CD8-positive, alpha-beta T cell (primary cell): ENCODE measurements at regions of chr12 and their contacts with region 1.

Region 1: GRCh38 chr12:59834659-59835474 is 239.0 kb downstream of the SLC16A7 start:
- DNase-seq: peak in 2 of 9 experiments; percentile 26 to 43
- ATAC-seq: no peak
- H3K4me3 ChIP-seq: no peak overlapping the region
- H3K4me3 Mint-ChIP-seq: no peak overlapping the region
- H3K27ac ChIP-seq: no peak overlapping the region
- H3K27ac Mint-ChIP-seq: no peak overlapping the region
- H3K4me1 ChIP-seq: no peaks in the 10 kb centered on the region
- H3K4me1 Mint-ChIP-seq: no peaks in the 10 kb centered on the region
- H3K27me3 ChIP-seq: no peaks in the 10 kb centered on the region
- H3K27me3 Mint-ChIP-seq: peaks cover 5% of the 10 kb centered on the region
- CTCF ChIP-seq: peak; percentile 53

Region 2: GRCh38 chr12:58346032-58346632 is 1488.7 kb before region 1 on chr12:
- CTCF ChIA-PET with region 1: no interaction called
- POLR2A ChIA-PET with region 1: no interaction called
- intact Hi-C with region 1: loop called (anchors 10 kb)
- DNase-seq: peak in 2 of 9 experiments; percentile 9 to 22
- ATAC-seq: no peak
- H3K4me3 ChIP-seq: no peak overlapping the region
- H3K4me3 Mint-ChIP-seq: no peak overlapping the region
- H3K27ac ChIP-seq: no peak overlapping the region
- H3K27ac Mint-ChIP-seq: no peak overlapping the region
- H3K4me1 ChIP-seq: no peaks in the 10 kb centered on the region
- H3K4me1 Mint-ChIP-seq: no peaks in the 10 kb centered on the region
- H3K27me3 ChIP-seq: peaks cover 0 to 2% of the 10 kb centered on the region in 2 experiments
- H3K27me3 Mint-ChIP-seq: peaks cover 14% of the 10 kb centered on the region
- CTCF ChIP-seq: peak; percentile 91

Region 3: GRCh38 chr12:59164991-59165718 is 669.7 kb before region 1 on chr12:
- CTCF ChIA-PET with region 1: no interaction called
- POLR2A ChIA-PET with region 1: no interaction called
- intact Hi-C with region 1: no loop called
- DNase-seq: no peak
- ATAC-seq: no peak
- H3K4me3 ChIP-seq: no peak overlapping the region
- H3K4me3 Mint-ChIP-seq: no peak overlapping the region
- H3K27ac ChIP-seq: no peak overlapping the region
- H3K27ac Mint-ChIP-seq: no peak overlapping the region
- H3K4me1 ChIP-seq: no peaks in the 10 kb centered on the region
- H3K4me1 Mint-ChIP-seq: no peaks in the 10 kb centered on the region
- H3K27me3 ChIP-seq: no peaks in the 10 kb centered on the region
- H3K27me3 Mint-ChIP-seq: no peaks in the 10 kb centered on the region
- CTCF ChIP-seq: no peak

Region 4: GRCh38 chr12:59403259-59403932 is 431.5 kb before region 1 on chr12:
- CTCF ChIA-PET with region 1: interaction called, 11 read pairs
- POLR2A ChIA-PET with region 1: no interaction called
- intact Hi-C with region 1: loop called (anchors 1 to 2 kb)
- DNase-seq: peak in 7 of 9 experiments; percentile 1 to 65 (median 27)
- ATAC-seq: no peak
- H3K4me3 ChIP-seq: no peak overlapping the region
- H3K4me3 Mint-ChIP-seq: no peak overlapping the region
- H3K27ac ChIP-seq: no peak overlapping the region
- H3K27ac Mint-ChIP-seq: no peak overlapping the region
- H3K4me1 ChIP-seq: no peaks in the 10 kb centered on the region
- H3K4me1 Mint-ChIP-seq: peaks cover 2% of the 10 kb centered on the region
- H3K27me3 ChIP-seq: no peaks in the 10 kb centered on the region
- H3K27me3 Mint-ChIP-seq: peaks cover 2% of the 10 kb centered on the region
- CTCF ChIP-seq: peak; percentile 78

Region 5: DNA sequence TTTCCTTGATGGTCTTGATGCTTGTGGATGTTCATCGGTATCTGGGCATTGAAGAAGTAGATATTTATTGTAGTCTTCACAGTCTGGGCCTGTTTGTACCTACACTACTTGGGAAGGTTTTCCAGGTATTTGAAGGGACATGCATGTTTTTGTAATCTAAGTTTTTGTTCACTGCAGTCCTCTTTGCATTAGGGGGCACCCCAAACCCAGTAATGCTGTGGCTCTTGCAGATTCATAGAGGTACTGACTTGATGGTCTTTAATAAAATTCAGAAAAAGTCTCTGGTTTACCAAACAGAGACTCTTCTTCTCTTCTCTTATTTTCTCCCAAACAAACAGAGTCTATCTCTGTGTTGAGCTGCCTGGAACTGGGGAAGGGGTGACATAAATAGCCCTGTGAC is 389.9 kb before region 1 on chr12:
- CTCF ChIA-PET with region 1: interaction called, 11 read pairs
- POLR2A ChIA-PET with region 1: no interaction called
- intact Hi-C with region 1: loop called (anchors 1 to 5 kb)
- DNase-seq: peak in 4 of 9 experiments; percentile 11 to 44 (median 30)
- ATAC-seq: no peak
- H3K4me3 ChIP-seq: no peak overlapping the region
- H3K4me3 Mint-ChIP-seq: no peak overlapping the region
- H3K27ac ChIP-seq: no peak overlapping the region
- H3K27ac Mint-ChIP-seq: no peak overlapping the region
- H3K4me1 ChIP-seq: no peaks in the 10 kb centered on the region
- H3K4me1 Mint-ChIP-seq: no peaks in the 10 kb centered on the region
- H3K27me3 ChIP-seq: no peaks in the 10 kb centered on the region
- H3K27me3 Mint-ChIP-seq: no peaks in the 10 kb centered on the region
- CTCF ChIP-seq: peak; percentile 46

Region 6: DNA sequence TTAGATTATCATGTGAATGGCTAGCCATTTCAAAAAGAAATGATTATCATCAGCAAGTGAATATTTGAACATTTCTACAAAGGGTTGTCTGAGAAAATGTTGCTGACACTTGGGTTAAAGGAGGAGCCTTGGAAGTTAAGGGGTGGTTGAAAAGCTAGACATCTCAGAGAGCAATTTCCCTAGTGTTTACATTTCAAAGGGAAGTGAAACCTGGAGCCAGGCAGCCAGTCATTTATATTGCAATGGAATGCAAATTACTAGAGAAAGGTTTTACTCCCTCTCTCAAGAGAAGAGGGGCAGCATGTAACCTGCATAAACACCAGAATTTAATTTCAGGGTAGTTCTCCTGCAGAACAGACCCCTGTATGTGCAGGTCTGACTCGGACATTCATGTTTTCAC is 39.9 kb after region 1 on chr12:
- CTCF ChIA-PET with region 1: no interaction called
- POLR2A ChIA-PET with region 1: no interaction called
- intact Hi-C with region 1: loop called in 1 of 2 experiments (anchors 2 kb)
- DNase-seq: no peak
- ATAC-seq: no peak
- H3K4me3 ChIP-seq: no peak overlapping the region
- H3K4me3 Mint-ChIP-seq: no peak overlapping the region
- H3K27ac ChIP-seq: no peak overlapping the region
- H3K27ac Mint-ChIP-seq: no peak overlapping the region
- H3K4me1 ChIP-seq: no peaks in the 10 kb centered on the region
- H3K4me1 Mint-ChIP-seq: no peaks in the 10 kb centered on the region
- H3K27me3 ChIP-seq: no peaks in the 10 kb centered on the region
- H3K27me3 Mint-ChIP-seq: no peaks in the 10 kb centered on the region
- CTCF ChIP-seq: no peak